ENCODE measurements at regions of chr1 and their contacts with region 1.

Region 1: DNA sequence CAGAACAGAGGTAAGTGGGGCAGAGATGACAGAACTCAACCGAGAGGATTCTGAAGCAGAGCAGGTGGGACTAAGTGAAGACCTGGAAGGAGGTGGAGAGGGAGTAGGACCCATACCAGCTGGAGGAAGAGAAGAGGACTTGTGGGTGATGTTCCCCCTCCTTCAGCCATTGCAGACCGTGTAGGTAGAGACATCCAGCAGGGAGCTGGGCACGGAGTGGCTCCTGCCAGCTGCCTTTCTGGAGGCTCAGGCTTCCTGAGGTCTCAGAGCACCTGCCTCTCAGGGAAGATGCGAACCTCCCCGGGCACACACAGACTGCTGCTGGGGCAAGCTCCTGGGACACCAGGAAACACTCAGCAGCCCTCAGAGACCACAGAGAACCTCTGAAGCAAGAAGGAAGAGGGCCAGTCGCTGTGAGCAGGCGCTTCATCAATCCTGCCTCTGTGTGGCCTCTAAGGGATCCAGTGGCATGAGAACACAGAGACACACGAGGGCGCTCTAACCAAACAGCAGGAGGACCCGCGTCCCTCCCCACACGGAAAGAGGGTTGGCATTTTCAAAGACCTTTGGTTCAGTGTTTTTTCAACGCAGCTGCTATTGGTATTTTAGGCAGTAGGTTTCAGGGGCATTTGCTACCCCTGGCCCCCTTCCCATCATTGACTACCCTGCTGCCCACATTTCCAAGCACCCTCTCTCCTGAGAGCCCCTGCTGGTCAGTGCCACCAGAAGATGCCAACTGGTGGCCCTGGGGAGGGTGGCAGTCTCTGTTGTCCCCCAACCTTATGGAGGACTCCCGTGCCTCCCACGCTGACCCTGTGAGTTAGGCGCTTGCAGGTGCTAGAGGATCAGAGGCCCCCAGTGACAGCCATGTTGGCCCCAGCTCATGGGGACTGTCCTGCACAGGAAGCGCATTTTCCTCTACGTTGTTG is 89.6 kb upstream of the EDN2 start:
- DNase-seq: peak; percentile 82
- H3K4me3 Mint-ChIP-seq: no peak overlapping the region
- H3K27ac Mint-ChIP-seq: no peak overlapping the region
- H3K4me1 Mint-ChIP-seq: no peaks in the 10 kb centered on the region
- H3K27me3 Mint-ChIP-seq: no peaks in the 10 kb centered on the region
- CTCF ChIP-seq: peak; percentile 92

Region 2: DNA sequence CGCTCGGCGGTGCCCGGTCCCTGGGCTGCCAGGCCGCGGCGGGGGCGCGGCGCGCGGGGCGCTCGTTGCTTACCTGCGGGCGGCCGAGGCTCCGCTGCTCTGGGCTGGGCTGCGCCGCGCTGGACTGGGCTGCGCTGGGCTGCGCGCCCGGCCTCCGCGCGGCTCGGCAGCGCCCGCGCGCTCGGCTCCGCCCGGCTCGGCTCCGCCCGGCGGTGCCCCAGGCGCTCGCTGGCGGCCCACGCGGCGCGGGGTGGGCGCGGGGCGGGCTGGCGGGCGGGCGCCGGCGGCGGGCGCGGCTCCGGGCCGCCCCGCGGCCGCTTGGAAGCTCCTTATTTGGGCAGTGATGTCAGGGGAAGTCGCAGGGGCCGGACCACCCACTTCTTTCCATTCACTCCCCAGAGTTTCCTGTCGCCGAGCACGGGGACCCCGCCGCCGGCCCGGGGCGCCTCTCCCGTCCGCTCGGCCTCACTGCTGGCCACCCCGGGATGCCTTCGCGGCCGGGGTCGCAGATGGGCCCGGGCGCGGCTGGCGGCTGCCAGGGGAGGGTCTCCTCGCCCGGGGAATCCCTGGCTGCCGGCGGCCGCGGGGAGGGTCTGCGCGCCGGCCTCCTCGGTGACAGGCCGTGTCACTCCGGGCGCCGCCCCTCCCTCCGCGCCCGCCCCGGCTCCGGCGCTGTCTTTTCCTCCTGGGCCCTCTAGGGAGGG is 88.2 kb after region 1 on chr1:
- CTCF ChIA-PET with region 1: interaction called, 7 read pairs
- POLR2A ChIA-PET with region 1: interaction called, 5 read pairs
- intact Hi-C with region 1: loop called (anchors 5 kb)
- DNase-seq: peak; percentile 51
- H3K4me3 Mint-ChIP-seq: peak overlapping the region; percentile 81
- H3K27ac Mint-ChIP-seq: no peak overlapping the region
- H3K4me1 Mint-ChIP-seq: peaks cover 50% of the 10 kb centered on the region
- H3K27me3 Mint-ChIP-seq: peaks cover 12% of the 10 kb centered on the region
- CTCF ChIP-seq: no peak

Region 3: DNA sequence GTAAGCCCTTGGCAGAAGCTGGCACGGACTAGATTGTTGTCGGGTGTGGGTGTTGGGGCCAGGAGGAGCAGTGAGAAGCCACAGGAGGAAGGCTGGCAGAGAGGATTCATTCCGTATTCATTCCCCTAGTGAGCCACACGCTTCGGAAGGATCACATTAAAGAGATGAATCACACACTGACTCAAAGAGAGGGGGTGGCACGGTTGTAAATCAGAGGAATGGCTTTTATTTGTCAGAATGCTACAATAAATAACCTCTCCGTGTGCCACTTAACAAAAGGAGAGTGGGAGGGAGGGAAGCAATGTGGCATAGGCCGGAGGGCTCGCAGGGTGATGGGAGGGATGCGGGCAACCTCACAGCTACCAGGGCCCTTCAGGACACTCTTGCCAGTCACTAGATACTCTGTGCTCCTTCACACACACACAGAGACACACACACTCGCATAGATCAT is 209.2 kb after region 1 on chr1:
- CTCF ChIA-PET with region 1: interaction called, 10 read pairs
- POLR2A ChIA-PET with region 1: interaction called, 3 read pairs
- intact Hi-C with region 1: no loop called
- DNase-seq: peak; percentile 90
- H3K4me3 Mint-ChIP-seq: peak overlapping the region; percentile 27
- H3K27ac Mint-ChIP-seq: peak overlapping the region; percentile 86
- H3K4me1 Mint-ChIP-seq: peaks cover 23% of the 10 kb centered on the region
- H3K27me3 Mint-ChIP-seq: no peaks in the 10 kb centered on the region
- CTCF ChIP-seq: no peak

Region 4: GRCh38 chr1:41795205-41795762 is 221.2 kb after region 1 on chr1:
- CTCF ChIA-PET with region 1: interaction called, 37 read pairs
- POLR2A ChIA-PET with region 1: interaction called, 4 read pairs
- intact Hi-C with region 1: loop called (anchors 1 kb)
- DNase-seq: peak; percentile 70
- H3K4me3 Mint-ChIP-seq: no peak overlapping the region
- H3K27ac Mint-ChIP-seq: no peak overlapping the region
- H3K4me1 Mint-ChIP-seq: no peaks in the 10 kb centered on the region
- H3K27me3 Mint-ChIP-seq: peaks cover 18% of the 10 kb centered on the region
- CTCF ChIP-seq: peak; percentile 46

Region 5: GRCh38 chr1:42035830-42036604 is 462.0 kb after region 1 on chr1:
- CTCF ChIA-PET with region 1: no interaction called
- POLR2A ChIA-PET with region 1: no interaction called
- intact Hi-C with region 1: loop called (anchors 5 kb)
- DNase-seq: peak; percentile 91
- H3K4me3 Mint-ChIP-seq: peak overlapping the region; percentile 69
- H3K27ac Mint-ChIP-seq: no peak overlapping the region
- H3K4me1 Mint-ChIP-seq: no peaks in the 10 kb centered on the region
- H3K27me3 Mint-ChIP-seq: peaks cover 12% of the 10 kb centered on the region
- CTCF ChIP-seq: no peak